ENCODE measurements at regions of chr1 and their contacts with region 1.

Region 1: GRCh38 chr1:25204797-25205480 is 27.4 kb downstream of the SYF2 start:
- DNase-seq: no peak
- ATAC-seq: peak; percentile 66
- H3K4me3 ChIP-seq: no peak overlapping the region
- H3K4me1 ChIP-seq: peaks cover 11% of the 10 kb centered on the region
- CTCF ChIP-seq: peak; percentile 40

Region 2: GRCh38 chr1:24822887-24823286 is 382.1 kb before region 1 on chr1:
- intact Hi-C with region 1: no loop called
- DNase-seq: no peak
- ATAC-seq: no peak
- H3K4me3 ChIP-seq: no peak overlapping the region
- H3K4me1 ChIP-seq: no peaks in the 10 kb centered on the region
- CTCF ChIP-seq: no peak

Region 3: DNA sequence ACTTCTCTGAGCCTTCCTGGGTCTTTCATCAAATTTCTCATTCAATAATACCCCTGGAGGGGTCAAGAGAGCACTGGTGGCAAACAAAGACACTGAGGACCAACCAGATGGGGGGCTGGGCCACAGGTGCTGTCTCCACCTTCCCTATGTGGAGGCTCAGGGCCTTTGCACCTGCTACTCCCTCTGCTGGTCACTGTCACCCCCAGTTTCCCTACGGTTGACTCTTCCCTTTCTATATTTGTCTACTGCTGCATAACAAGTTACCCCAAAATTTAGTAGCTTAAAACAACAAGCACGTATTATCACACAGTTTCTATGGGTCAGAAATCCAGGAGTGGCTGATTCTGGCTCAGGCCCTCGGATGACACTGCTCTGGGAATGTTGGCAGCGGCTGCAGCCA is 136.1 kb before region 1 on chr1:
- intact Hi-C with region 1: no loop called
- DNase-seq: peak in 1 of 3 donors; percentile 7
- ATAC-seq: no peak
- H3K4me3 ChIP-seq: no peak overlapping the region
- H3K4me1 ChIP-seq: no peaks in the 10 kb centered on the region
- CTCF ChIP-seq: no peak

Region 4: GRCh38 chr1:25117233-25117823 is 87.6 kb before region 1 on chr1:
- intact Hi-C with region 1: loop called in 1 of 2 experiments (anchors 10 kb)
- DNase-seq: peak in 2 of 3 donors; percentile 69 to 77
- ATAC-seq: peak; percentile 88
- H3K4me3 ChIP-seq: no peak overlapping the region
- H3K4me1 ChIP-seq: no peaks in the 10 kb centered on the region
- CTCF ChIP-seq: peak; percentile 25

Region 5: GRCh38 chr1:25648681-25649440 is 443.9 kb after region 1 on chr1:
- intact Hi-C with region 1: no loop called
- DNase-seq: no peak
- ATAC-seq: no peak
- H3K4me3 ChIP-seq: no peak overlapping the region
- H3K4me1 ChIP-seq: no peaks in the 10 kb centered on the region
- CTCF ChIP-seq: no peak

Measured in mucosa of descending colon (tissue), 3 donors.